H1 (cell line): ENCODE measurements at regions of chr17 and their contacts with region 1.

Region 1: DNA sequence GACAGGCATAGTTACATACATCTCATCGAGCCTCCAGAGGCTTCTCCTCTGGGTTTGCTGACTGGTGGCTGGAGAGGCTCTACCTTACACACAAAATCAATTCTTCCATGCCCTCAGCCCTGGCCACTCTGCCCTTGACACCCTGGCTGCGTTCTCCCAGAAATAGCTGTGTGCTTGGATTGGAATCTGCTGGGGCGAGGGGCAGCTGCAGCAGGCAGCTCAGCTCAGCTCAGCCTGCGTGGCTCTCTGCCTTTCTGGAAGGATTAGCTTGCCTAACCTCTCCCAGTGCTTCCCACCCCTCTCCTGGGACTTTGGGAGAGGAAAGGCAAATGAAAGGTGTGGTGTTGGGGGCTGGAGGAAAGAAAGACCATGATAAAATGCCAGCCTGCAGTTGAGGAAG is 216.1 kb downstream of the ENGASE start:
- DNase-seq: no peak
- H3K4me3 ChIP-seq: no peak overlapping the region
- H3K27ac ChIP-seq: no peak overlapping the region
- H3K4me1 ChIP-seq: 0 out of 7 replicates have a peak, but pooled peaks cover 0 to 3% (median 0%) of the 10 kb centered on the region in 4 experiments
- H3K27me3 ChIP-seq: peaks cover 0 to 11% (median 1%) of the 10 kb centered on the region in 4 experiments; a peak in 4 of 7 replicates
- CTCF ChIP-seq: no peak
- EP300 ChIP-seq: no peak
- POLR2A ChIP-seq: no peak
- RAD21 ChIP-seq: no peak

Region 2: DNA sequence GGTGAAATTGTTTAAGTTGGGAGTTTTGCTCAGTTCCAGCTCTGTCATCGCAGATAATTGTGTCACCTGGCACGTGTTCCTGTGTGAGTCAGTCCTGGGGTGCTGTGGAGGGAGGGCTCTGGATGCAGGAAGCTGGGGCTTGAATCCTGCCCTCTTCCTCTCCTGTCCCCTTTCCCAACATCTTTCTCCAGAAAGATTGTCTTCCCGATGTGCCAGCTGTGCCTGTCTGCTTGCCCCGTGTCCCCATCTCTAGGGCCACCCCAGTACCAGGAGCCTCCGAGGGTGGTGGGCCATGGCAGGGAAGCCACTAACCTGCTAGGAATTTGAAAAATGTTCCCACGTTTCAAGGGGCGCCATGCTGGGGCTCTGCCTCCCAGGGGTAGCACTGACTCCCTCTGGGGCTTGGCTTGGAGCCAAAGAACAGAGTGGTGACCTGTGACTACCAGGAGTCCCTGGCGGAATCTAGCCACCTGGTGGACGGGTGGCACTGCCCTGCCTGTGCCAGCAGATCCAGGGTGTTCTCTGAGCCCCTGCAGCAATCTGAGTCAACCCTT is 18.0 kb before region 1 on chr17:
- CTCF ChIA-PET with region 1: interaction called, 10 read pairs
- POLR2A ChIA-PET with region 1: no interaction called
- DNase-seq: no peak
- H3K4me3 ChIP-seq: no peak overlapping the region
- H3K27ac ChIP-seq: no peak overlapping the region
- H3K4me1 ChIP-seq: peaks cover 0 to 17% (median 3%) of the 10 kb centered on the region in 4 experiments; a peak in 4 of 7 replicates
- H3K27me3 ChIP-seq: no peaks in the 10 kb centered on the region; a peak in 1 of 7 replicates
- CTCF ChIP-seq: no peak
- EP300 ChIP-seq: no peak
- POLR2A ChIP-seq: no peak
- RAD21 ChIP-seq: no peak

Region 3: DNA sequence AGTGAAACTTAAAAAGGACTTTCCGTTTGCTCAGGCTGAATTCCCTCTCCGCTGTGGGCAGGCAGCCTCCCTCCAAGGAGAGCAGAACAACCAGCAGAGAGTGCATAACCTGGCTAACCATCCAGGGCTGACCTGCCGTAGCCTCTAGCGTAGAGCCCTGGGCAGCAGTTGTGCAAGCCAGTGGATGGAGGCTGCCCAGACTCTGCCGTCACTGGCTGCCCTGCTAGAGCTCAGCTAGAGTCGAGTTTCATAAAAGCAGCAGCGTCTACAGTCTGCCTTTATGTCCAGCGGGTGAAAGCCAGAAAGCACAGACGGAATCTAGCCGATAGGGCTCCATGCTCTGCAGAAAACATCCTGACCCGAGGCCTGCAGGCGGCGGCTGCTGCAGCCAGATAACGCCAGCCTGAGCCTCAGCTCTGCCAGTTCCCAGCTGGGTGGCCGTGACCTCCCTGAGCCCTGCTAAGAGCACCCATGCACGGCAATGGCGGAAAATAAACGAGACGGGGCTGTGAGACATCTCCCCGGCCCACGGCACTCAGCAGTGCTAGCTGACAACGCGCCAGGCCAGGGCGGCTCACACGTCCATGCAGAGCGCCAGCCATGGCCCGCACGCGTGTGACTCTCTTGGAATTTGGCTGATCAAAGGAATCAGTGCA is 15.2 kb after region 1 on chr17:
- CTCF ChIA-PET with region 1: interaction called, 12 read pairs
- POLR2A ChIA-PET with region 1: no interaction called
- DNase-seq: no peak
- H3K4me3 ChIP-seq: no peak overlapping the region
- H3K27ac ChIP-seq: no peak overlapping the region
- H3K4me1 ChIP-seq: peaks cover 0 to 3% (median 0%) of the 10 kb centered on the region in 4 experiments; a peak in 1 of 7 replicates
- H3K27me3 ChIP-seq: no peaks in the 10 kb centered on the region
- CTCF ChIP-seq: no peak
- EP300 ChIP-seq: no peak
- POLR2A ChIP-seq: no peak
- RAD21 ChIP-seq: no peak